ENCODE measurements at regions of chr11 and their contacts with region 1.

Region 1: DNA sequence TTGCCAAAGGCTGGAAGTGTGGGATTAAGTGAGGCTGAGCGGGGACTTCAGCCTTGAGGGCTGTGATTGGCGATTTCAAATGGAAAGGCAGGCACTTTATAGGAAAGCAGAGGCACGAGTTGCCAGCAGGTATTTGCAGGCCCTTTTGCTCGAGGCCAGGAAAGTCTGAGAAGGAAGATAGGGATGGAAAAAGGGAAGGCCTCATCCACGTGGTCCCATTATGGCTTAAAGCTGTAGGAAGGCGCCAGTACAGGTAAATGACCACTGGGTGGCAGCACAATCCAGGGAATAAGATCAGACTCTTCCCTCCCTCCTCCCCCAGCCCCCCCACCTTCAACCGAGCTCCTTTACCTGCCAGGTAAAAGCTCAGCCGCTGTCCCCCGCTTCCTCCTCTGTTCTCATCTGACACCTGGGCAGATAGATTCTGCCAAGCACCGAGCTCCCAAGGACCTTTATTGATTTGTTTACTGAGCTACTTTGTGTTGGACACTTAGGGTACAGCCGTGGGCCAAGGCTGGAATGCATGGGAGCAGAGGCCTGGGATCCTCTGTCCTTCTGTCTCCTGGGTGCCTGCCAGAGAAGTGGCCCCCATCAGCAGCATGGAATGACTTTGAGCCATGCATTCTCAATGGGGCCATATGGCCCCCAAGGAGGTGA is 7.5 kb downstream of the P2RX3 start:
- DNase-seq: peak; percentile 68 to 92
- H3K4me3 ChIP-seq: no peak overlapping the region
- CTCF ChIP-seq: no peak
- POLR2A ChIP-seq: no peak

Region 2: GRCh38 chr11:57277845-57278709 is 67.6 kb before region 1 on chr11:
- intact Hi-C with region 1: no loop called
- DNase-seq: peak; percentile 80 to 94
- H3K4me3 ChIP-seq: no peak overlapping the region
- CTCF ChIP-seq: peak in 1 of 3 donors; percentile 75
- POLR2A ChIP-seq: no peak

Region 3: DNA sequence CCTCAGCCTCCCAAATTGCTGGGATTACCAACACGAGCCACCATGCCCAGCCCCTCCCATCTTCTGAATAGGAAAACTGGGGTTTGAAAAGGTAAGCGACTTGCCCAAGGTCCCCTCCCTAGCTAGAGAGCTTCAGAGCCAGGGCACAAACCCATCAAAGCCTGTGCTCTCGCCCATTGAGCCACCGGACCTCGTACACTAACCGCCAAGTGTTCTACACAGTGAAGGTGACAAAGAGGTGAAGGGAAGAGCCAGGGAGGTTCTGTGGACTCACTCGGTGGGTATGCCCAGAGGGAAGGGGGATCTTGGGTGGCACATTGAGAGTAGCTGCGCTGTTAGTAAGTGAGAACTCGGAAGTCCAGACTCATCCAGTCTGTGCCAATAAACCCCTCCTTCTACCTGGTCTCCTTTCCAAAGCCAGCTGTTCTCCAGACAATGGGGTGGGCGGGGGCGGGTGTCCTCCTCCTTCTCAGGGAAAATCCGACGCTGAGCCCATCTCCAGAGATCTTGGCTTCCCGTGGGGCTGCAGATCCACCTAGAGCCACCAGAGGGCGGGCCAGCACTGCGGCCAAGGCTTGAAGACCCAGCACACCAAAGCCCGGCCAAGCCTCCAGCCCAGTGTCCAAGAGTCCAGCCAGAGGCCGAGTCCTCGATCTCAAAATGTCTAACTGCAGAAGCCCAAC is 111.4 kb after region 1 on chr11:
- intact Hi-C with region 1: loop called (anchors 10 kb)
- DNase-seq: peak; percentile 86 to 98
- H3K4me3 ChIP-seq: no peak overlapping the region
- CTCF ChIP-seq: peak in 1 of 3 donors; percentile 68
- POLR2A ChIP-seq: no peak

Region 4: DNA sequence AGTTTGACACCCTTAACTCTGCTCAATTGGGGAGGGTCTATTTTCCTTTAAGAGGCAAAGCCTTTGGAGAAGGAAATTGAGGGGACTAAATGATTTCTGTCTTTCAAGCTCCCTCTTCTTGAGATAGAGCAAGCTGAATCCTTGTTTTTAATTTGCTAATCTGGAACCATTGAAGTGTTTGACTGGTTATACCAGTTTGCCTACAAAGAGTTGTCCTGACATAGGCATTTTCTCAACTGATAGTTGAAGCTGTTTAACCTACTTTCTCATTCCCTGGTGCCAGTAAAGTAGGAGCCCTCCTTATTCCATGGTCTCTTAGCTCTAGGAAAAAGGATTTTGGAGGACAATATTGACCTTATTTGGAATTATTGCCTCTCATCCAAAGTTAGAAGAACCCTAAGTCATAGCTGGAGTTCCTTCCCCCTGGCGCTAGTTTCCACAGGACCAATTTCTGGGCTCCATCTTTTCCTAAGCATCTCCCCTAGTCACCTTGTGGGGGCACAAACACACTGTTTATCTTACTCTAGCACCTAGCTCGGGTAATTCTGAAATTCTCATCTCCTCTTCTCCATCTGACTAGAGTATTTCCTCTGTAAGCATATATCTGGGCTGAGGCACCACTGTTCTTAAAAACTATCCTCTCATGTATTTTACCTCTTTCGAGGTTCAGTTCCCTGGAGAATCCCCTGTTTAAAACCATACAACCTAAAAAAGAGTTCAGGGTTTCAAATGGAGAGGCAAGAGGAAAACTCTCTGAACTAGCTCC is 329.7 kb after region 1 on chr11:
- intact Hi-C with region 1: no loop called
- DNase-seq: no peak
- H3K4me3 ChIP-seq: no peak overlapping the region
- CTCF ChIP-seq: no peak
- POLR2A ChIP-seq: no peak

Region 5: DNA sequence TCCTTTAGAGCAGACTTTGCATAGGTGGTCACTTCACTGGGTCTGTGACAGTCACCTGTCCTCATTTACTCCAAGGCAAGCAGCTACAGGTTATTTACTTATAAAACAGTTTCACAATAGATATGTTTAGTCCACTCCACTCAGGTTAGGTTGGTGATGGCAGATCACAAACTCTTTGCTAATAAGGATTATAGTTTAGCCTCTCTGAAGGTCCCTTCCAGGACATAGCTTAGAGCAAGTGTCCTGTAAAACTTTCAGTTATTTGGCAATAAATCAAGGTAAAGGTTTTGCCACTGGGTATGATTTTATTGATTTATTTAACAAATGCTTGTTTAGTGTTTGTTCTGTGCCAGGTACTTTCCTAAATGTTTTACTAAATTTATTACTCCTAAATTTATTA is 693.9 kb after region 1 on chr11:
- intact Hi-C with region 1: no loop called
- DNase-seq: no peak
- H3K4me3 ChIP-seq: no peak overlapping the region
- CTCF ChIP-seq: no peak
- POLR2A ChIP-seq: no peak